ENCODE measurements at regions of chr14 and their contacts with region 1.

Region 1: GRCh38 chr14:22986508-22987054 is 4.2 kb upstream of the AJUBA start:
- DNase-seq: peak; percentile 79
- H3K4me3 ChIP-seq: no peak overlapping the region; a peak in 1 of 4 replicates
- H3K27ac ChIP-seq: no peak overlapping the region
- H3K4me1 ChIP-seq: peaks cover 0 to 4% of the 10 kb centered on the region in 2 experiments; a peak in 1 of 4 replicates
- H3K27me3 ChIP-seq: no peaks in the 10 kb centered on the region
- CTCF ChIP-seq: peak; percentile 91
- EP300 ChIP-seq: no peak
- RAD21 ChIP-seq: peak; percentile 97

Region 2: GRCh38 chr14:22939684-22940083 is 46.9 kb before region 1 on chr14:
- CTCF ChIA-PET with region 1: interaction called, 14 read pairs
- POLR2A ChIA-PET with region 1: no interaction called
- DNase-seq: no peak
- H3K4me3 ChIP-seq: no peak overlapping the region
- H3K27ac ChIP-seq: no peak overlapping the region
- H3K4me1 ChIP-seq: no peaks in the 10 kb centered on the region
- H3K27me3 ChIP-seq: no peaks in the 10 kb centered on the region
- CTCF ChIP-seq: no peak
- EP300 ChIP-seq: no peak
- RAD21 ChIP-seq: no peak

Region 3: DNA sequence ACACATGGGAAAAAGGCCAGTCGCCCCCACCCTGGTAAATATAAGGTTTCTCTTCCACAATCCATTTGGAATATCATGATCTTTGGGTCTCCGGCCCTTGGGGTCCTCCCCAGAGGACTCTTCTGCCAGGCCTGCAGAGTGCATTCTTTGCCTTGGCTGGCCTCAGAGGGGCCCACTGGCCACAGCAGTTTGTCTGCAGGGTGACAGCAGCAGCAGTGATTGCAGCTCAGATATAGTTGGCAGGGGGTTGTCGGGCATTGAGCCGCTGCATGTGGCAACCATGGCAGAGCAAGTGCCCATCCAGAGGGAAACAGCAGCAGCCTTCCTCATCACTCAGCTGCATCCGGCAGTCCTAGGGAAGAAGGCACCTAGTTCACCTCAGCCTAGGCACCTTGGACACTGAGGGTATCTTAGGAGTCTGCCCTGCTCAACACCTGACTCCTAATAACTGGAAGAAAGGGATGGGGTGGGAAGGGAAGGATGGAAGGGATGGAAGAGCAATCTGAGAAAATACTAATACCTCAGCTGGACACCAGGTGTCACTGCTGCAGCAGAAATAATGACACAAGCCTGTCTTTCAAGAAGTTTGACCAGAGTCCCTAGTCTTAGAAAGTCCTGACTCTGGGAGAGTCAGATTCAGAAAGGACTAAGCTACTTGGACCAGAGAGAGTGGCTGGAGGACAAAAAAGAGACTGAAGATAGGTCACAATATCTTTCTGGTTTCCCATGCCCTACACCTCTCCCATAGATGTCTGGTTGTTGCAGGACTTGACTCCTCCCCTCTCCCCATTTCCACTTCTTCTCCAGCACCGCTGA is 13.2 kb before region 1 on chr14:
- CTCF ChIA-PET with region 1: interaction called, 198 read pairs
- POLR2A ChIA-PET with region 1: no interaction called
- DNase-seq: peak; percentile 67
- H3K4me3 ChIP-seq: no peak overlapping the region
- H3K27ac ChIP-seq: no peak overlapping the region; a peak in 1 of 4 replicates
- H3K4me1 ChIP-seq: peaks cover 21 to 23% of the 10 kb centered on the region in 2 experiments
- H3K27me3 ChIP-seq: no peaks in the 10 kb centered on the region
- CTCF ChIP-seq: peak; percentile 71
- EP300 ChIP-seq: no peak
- RAD21 ChIP-seq: peak; percentile 88

Region 4: DNA sequence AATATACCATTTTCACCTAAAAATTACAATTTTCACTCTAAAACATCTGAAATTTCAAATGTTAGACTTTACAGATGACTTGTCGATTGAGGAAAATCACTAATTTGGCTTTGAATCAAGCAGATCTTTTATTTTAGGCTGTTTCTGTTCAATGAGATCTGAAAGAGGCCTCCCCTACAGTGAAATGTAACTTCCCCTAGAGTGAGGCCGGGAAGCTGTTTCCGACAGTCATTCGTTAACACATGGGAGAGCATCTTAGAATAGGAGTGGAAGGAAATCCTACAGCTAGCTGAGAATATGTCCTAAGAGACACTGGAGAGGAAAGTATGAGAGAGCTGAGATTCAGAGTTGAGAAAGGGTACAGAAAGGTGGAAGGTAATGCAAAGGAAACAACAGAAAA is 29.0 kb after region 1 on chr14:
- CTCF ChIA-PET with region 1: interaction called, 10 read pairs
- POLR2A ChIA-PET with region 1: no interaction called
- DNase-seq: no peak
- H3K4me3 ChIP-seq: no peak overlapping the region
- H3K27ac ChIP-seq: no peak overlapping the region
- H3K4me1 ChIP-seq: peaks cover 0 to 11% of the 10 kb centered on the region in 2 experiments; a peak in 1 of 4 replicates
- H3K27me3 ChIP-seq: no peaks in the 10 kb centered on the region
- CTCF ChIP-seq: no peak
- EP300 ChIP-seq: no peak
- RAD21 ChIP-seq: no peak

Region 5: DNA sequence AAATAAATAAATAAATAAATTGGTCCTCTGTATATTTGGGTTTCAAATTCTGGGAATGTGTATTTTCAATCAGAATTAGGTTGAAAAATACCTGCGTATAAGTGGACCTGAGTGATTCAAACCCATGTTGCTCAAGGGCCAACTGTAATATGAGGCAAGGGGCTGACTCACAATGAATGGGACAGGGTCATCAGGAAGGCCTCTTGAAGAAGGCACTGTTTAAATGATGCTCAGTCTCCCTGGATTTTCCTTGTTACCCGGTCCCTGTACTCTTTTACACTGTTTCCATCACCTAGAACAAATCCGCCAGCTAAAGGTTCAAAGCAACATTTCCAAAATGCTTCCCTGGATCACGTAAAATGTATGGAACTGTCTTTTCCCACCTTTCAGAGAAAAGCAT is 44.4 kb after region 1 on chr14:
- CTCF ChIA-PET with region 1: interaction called, 27 read pairs
- POLR2A ChIA-PET with region 1: no interaction called
- DNase-seq: no peak
- H3K4me3 ChIP-seq: no peak overlapping the region
- H3K27ac ChIP-seq: no peak overlapping the region
- H3K4me1 ChIP-seq: peaks cover 9 to 22% of the 10 kb centered on the region in 2 experiments; a peak in 3 of 4 replicates
- H3K27me3 ChIP-seq: no peaks in the 10 kb centered on the region
- CTCF ChIP-seq: no peak
- EP300 ChIP-seq: no peak
- RAD21 ChIP-seq: no peak

Region 6: GRCh38 chr14:23076785-23077408 is 90.3 kb after region 1 on chr14:
- CTCF ChIA-PET with region 1: interaction called, 22 read pairs
- POLR2A ChIA-PET with region 1: no interaction called
- DNase-seq: peak; percentile 48
- H3K4me3 ChIP-seq: no peak overlapping the region
- H3K27ac ChIP-seq: 0 out of 4 replicates have a peak overlapping the region, but pooled peaks of 1 of the 2 experiments have one; percentile 75
- H3K4me1 ChIP-seq: peaks cover 6 to 30% of the 10 kb centered on the region in 2 experiments
- H3K27me3 ChIP-seq: no peaks in the 10 kb centered on the region
- CTCF ChIP-seq: peak; percentile 80
- EP300 ChIP-seq: no peak
- RAD21 ChIP-seq: peak; percentile 41

Measured in SK-N-SH (cell line).